CD4-positive, alpha-beta memory T cell (primary cell): ENCODE measurements at regions of chr13 and their contacts with region 1.

Region 1: GRCh38 chr13:25001476-25002206 is 94.3 kb upstream of the PABPC3 start:
- DNase-seq: no peak
- H3K4me3 ChIP-seq: no peak overlapping the region
- H3K4me3 Mint-ChIP-seq: no peak overlapping the region
- H3K27ac ChIP-seq: no peak overlapping the region
- H3K27ac Mint-ChIP-seq: no peak overlapping the region
- H3K4me1 ChIP-seq: no peaks in the 10 kb centered on the region
- H3K4me1 Mint-ChIP-seq: peaks cover 0 to 5% (median 3%) of the 10 kb centered on the region in 4 donors
- H3K27me3 ChIP-seq: peaks cover 10% of the 10 kb centered on the region
- H3K27me3 Mint-ChIP-seq: peaks cover 23 to 36% of the 10 kb centered on the region in 2 donors

Region 2: DNA sequence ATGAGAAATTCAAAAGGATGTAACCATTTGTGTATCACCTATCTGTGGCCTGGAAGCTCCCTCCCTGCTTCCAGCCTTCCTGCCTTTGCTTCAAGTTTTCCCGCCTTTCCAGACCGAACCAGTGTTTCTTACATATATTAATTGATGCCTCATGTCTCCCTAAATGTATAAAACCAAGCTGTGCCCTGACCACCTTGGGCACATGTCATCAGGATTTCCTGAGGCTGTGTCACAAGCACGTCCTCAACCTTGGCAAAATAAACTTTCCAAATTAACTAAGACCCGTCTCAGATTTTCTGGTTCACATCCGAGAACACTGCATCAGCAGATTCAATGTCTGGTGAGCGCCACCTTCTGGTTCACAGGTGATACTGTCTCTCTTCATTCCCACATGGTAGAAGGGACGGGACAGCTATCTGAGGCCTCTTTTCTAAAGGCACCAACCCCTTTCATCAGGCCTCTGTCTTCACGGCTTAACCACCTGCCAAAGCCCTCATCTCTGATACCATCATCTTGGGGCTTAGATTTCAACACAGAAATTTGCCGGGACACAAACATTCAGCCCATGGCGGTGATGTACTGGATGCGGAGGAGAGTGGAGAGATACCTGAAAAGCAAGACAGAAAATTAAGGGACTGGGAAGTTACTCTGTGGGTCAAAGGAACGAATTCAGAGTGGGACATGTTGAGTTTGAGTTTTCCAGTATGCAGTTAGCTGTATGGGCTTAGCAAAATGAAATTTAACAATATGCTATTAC is 35.6 kb after region 1 on chr13:
- CTCF ChIA-PET with region 1: interaction called, 12 read pairs
- POLR2A ChIA-PET with region 1: no interaction called
- intact Hi-C with region 1: loop called (anchors 1 kb)
- DNase-seq: peak; percentile 27 to 54 (median 50)
- H3K4me3 ChIP-seq: no peak overlapping the region
- H3K4me3 Mint-ChIP-seq: no peak overlapping the region
- H3K27ac ChIP-seq: no peak overlapping the region
- H3K27ac Mint-ChIP-seq: no peak overlapping the region
- H3K4me1 ChIP-seq: no peaks in the 10 kb centered on the region
- H3K4me1 Mint-ChIP-seq: no peaks in the 10 kb centered on the region
- H3K27me3 ChIP-seq: peaks cover 6% of the 10 kb centered on the region
- H3K27me3 Mint-ChIP-seq: peaks cover 25 to 38% of the 10 kb centered on the region in 2 donors

Region 3: GRCh38 chr13:26074706-26075105 is 1073.1 kb after region 1 on chr13:
- CTCF ChIA-PET with region 1: interaction called, 5 read pairs
- POLR2A ChIA-PET with region 1: no interaction called
- intact Hi-C with region 1: loop called (anchors 10 kb)
- DNase-seq: no peak
- H3K4me3 ChIP-seq: no peak overlapping the region
- H3K4me3 Mint-ChIP-seq: no peak overlapping the region
- H3K27ac ChIP-seq: no peak overlapping the region
- H3K27ac Mint-ChIP-seq: no peak overlapping the region
- H3K4me1 ChIP-seq: no peaks in the 10 kb centered on the region
- H3K4me1 Mint-ChIP-seq: no peaks in the 10 kb centered on the region
- H3K27me3 ChIP-seq: no peaks in the 10 kb centered on the region
- H3K27me3 Mint-ChIP-seq: peaks cover 23 to 25% of the 10 kb centered on the region in 2 donors